ENCODE measurements at regions of chr2 and their contacts with region 1.

Region 1: GRCh38 chr2:127220102-127220767 is at the start of gene CYP27C1:
- DNase-seq: peak; percentile 31 to 36
- H3K4me3 ChIP-seq: peak within 1 kb of the TSS; percentile 79
- H3K27ac ChIP-seq: peak within 1 kb of the TSS; percentile 97
- H3K4me1 ChIP-seq: peaks cover 54% of the 10 kb centered on the region
- H3K27me3 ChIP-seq: no peaks in the 10 kb centered on the region
- CTCF ChIP-seq: no peak
- total RNA-seq, gene CYP27C1: 0.94 and 1.6 TPM in 2 replicates

Region 2: GRCh38 chr2:127278959-127279358 is 58.7 kb after region 1 on chr2:
- CTCF ChIA-PET with region 1: no interaction called
- POLR2A ChIA-PET with region 1: interaction called, 10 read pairs
- intact Hi-C with region 1: no loop called
- DNase-seq: no peak
- H3K4me3 ChIP-seq: no peak overlapping the region
- H3K27ac ChIP-seq: no peak overlapping the region
- H3K4me1 ChIP-seq: no peaks in the 10 kb centered on the region
- H3K27me3 ChIP-seq: no peaks in the 10 kb centered on the region
- CTCF ChIP-seq: no peak

Region 3: GRCh38 chr2:127305990-127306585 is 85.9 kb after region 1 on chr2:
- CTCF ChIA-PET with region 1: no interaction called
- POLR2A ChIA-PET with region 1: interaction called, 21 read pairs
- intact Hi-C with region 1: no loop called
- DNase-seq: no peak
- H3K4me3 ChIP-seq: no peak overlapping the region
- H3K27ac ChIP-seq: 0 out of 2 replicates have a peak overlapping the region, but pooled peaks have one; percentile 0
- H3K4me1 ChIP-seq: no peaks in the 10 kb centered on the region
- H3K27me3 ChIP-seq: no peaks in the 10 kb centered on the region
- CTCF ChIP-seq: no peak

Region 4: GRCh38 chr2:128232965-128233789 is 1012.9 kb after region 1 on chr2:
- CTCF ChIA-PET with region 1: no interaction called
- POLR2A ChIA-PET with region 1: no interaction called
- intact Hi-C with region 1: no loop called
- DNase-seq: peak; percentile 58 to 89
- H3K4me3 ChIP-seq: peak overlapping the region; percentile 75
- H3K27ac ChIP-seq: no peak overlapping the region
- H3K4me1 ChIP-seq: no peaks in the 10 kb centered on the region
- H3K27me3 ChIP-seq: no peaks in the 10 kb centered on the region
- CTCF ChIP-seq: peak; percentile 95

Measured in PC-9 (cell line).